Caco-2 (cell line): ENCODE measurements at regions of chr11 and their contacts with region 1.

Region 1: GRCh38 chr11:93330446-93330984 is at the start of gene DEUP1:
- DNase-seq: peak; percentile 52 to 71
- H3K4me3 ChIP-seq: peak within 1 kb of the TSS; percentile 38
- H3K4me3 Mint-ChIP-seq: peak within 1 kb of the TSS; percentile 80
- H3K27ac Mint-ChIP-seq: no peak within 1 kb of the TSS
- H3K4me1 ChIP-seq: no peaks in the 10 kb centered on the region
- H3K4me1 Mint-ChIP-seq: no peaks in the 10 kb centered on the region
- H3K27me3 ChIP-seq: no peaks in the 10 kb centered on the region; the same call in none of the 2 replicates
- H3K27me3 Mint-ChIP-seq: peaks cover 25% of the 10 kb centered on the region
- CTCF ChIP-seq: no peak
- total RNA-seq, gene DEUP1: 0.25 and 0.60 TPM in 2 replicates

Region 2: GRCh38 chr11:92819830-92820229 is 510.7 kb before region 1 on chr11:
- CTCF ChIA-PET with region 1: no interaction called
- POLR2A ChIA-PET with region 1: no interaction called
- intact Hi-C with region 1: loop called (anchors 5 kb)
- DNase-seq: no peak
- H3K4me3 ChIP-seq: no peak overlapping the region
- H3K4me3 Mint-ChIP-seq: no peak overlapping the region
- H3K27ac Mint-ChIP-seq: no peak overlapping the region
- H3K4me1 ChIP-seq: no peaks in the 10 kb centered on the region
- H3K4me1 Mint-ChIP-seq: no peaks in the 10 kb centered on the region
- H3K27me3 ChIP-seq: no peaks in the 10 kb centered on the region
- H3K27me3 Mint-ChIP-seq: peaks cover 13% of the 10 kb centered on the region
- CTCF ChIP-seq: no peak

Region 3: DNA sequence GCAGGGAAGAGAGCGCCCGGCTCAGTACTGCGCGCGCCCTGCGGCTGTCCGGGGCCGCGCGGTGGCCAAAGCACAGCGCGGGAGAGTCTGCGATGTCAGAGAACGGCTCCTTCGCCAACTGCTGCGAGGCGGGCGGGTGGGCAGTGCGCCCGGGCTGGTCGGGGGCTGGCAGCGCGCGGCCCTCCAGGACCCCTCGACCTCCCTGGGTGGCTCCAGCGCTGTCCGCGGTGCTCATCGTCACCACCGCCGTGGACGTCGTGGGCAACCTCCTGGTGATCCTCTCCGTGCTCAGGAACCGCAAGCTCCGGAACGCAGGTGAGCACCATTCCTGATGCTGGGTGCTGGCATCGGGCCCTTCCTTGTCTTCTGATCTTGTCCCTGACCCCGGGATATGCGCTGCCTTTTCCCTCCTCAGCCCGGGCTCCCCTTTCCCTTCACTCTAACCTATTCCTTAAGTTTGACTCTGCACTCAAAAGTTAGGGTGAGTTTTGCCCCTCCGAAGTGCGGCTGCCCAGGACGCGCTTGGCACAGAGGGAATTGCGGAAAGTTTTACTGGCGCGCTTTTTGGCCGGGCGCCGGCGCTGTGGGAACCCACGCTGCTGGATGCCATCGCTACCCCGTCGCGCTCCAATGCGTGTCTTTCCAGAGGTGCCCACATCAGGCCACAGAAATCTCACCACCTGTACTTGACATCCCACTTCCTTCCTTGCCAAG is 360.7 kb before region 1 on chr11 and contains the start of gene MTNR1B:
- CTCF ChIA-PET with region 1: no interaction called
- POLR2A ChIA-PET with region 1: no interaction called
- intact Hi-C with region 1: no loop called
- DNase-seq: no peak
- H3K4me3 ChIP-seq: no peak within 1 kb of the TSS
- H3K4me3 Mint-ChIP-seq: no peak within 1 kb of the TSS
- H3K27ac Mint-ChIP-seq: no peak within 1 kb of the TSS
- H3K4me1 ChIP-seq: no peaks in the 10 kb centered on the region
- H3K4me1 Mint-ChIP-seq: no peaks in the 10 kb centered on the region
- H3K27me3 ChIP-seq: no peaks in the 10 kb centered on the region
- H3K27me3 Mint-ChIP-seq: peaks cover 20% of the 10 kb centered on the region
- CTCF ChIP-seq: no peak
- total RNA-seq, gene MTNR1B: not detected in 2 replicates